Activated CD8-positive, alpha-beta T cell treated with anti-CD3 and anti-CD28 coated beads, Interleukin-2, amount 10 ng/mL, durations not matched to agents 7 days and 5 days (primary cell): ENCODE measurements at regions of chr10 and their contacts with region 1.

Region 1: DNA sequence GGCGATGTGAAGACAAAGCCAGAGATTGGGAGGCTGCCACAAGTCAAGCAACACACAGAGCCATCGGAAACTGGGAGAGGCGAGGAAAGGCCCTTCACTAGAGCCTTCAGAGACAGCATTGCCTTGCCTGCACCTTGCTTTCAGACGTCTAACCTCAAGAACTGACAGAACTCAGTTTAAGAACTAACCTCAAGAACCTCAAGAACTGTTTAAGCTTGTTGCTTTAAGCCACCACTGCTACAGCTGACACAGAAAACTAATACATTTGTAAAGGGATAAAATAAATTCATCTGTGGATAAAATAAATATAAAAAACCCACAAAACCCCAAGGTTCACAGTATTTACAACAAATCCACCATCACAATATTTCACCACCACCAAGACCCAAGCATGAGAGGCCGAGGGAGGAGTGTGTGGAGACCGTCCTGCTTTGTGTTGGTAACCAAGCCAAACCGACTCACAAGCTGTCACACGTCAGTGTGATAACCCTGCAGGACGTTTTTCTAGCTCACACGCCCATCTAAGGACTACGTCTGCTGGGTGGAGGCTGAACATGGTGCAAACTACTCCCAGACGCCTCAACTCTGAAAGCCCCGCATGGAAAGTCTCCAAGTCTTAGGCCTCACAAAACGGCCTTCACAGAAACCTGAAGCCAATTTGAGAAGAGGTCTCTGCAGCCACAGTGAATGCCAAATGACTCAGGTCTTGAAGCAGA is 116.8 kb downstream of the ABLIM1 start:
- DNase-seq: peak; percentile 88
- ATAC-seq: peak; percentile 83
- H3K4me3 Mint-ChIP-seq: peak overlapping the region; percentile 60
- H3K27ac Mint-ChIP-seq: peak overlapping the region; percentile 98
- H3K4me1 Mint-ChIP-seq: peaks cover 89% of the 10 kb centered on the region
- H3K27me3 Mint-ChIP-seq: no peaks in the 10 kb centered on the region

Region 2: GRCh38 chr10:114486938-114487814 is 54.1 kb before region 1 on chr10:
- CTCF ChIA-PET with region 1: interaction called, 10 read pairs
- POLR2A ChIA-PET with region 1: interaction called, 10 read pairs
- DNase-seq: no peak
- ATAC-seq: no peak
- H3K4me3 Mint-ChIP-seq: no peak overlapping the region
- H3K27ac Mint-ChIP-seq: no peak overlapping the region
- H3K4me1 Mint-ChIP-seq: peaks cover 28% of the 10 kb centered on the region
- H3K27me3 Mint-ChIP-seq: no peaks in the 10 kb centered on the region

Region 3: GRCh38 chr10:114492351-114493037 is 48.7 kb before region 1 on chr10:
- CTCF ChIA-PET with region 1: interaction called, 10 read pairs
- POLR2A ChIA-PET with region 1: interaction called, 10 read pairs
- DNase-seq: peak; percentile 66
- ATAC-seq: peak; percentile 59
- H3K4me3 Mint-ChIP-seq: peak overlapping the region; percentile 53
- H3K27ac Mint-ChIP-seq: peak overlapping the region; percentile 68
- H3K4me1 Mint-ChIP-seq: peaks cover 72% of the 10 kb centered on the region
- H3K27me3 Mint-ChIP-seq: no peaks in the 10 kb centered on the region

Region 4: DNA sequence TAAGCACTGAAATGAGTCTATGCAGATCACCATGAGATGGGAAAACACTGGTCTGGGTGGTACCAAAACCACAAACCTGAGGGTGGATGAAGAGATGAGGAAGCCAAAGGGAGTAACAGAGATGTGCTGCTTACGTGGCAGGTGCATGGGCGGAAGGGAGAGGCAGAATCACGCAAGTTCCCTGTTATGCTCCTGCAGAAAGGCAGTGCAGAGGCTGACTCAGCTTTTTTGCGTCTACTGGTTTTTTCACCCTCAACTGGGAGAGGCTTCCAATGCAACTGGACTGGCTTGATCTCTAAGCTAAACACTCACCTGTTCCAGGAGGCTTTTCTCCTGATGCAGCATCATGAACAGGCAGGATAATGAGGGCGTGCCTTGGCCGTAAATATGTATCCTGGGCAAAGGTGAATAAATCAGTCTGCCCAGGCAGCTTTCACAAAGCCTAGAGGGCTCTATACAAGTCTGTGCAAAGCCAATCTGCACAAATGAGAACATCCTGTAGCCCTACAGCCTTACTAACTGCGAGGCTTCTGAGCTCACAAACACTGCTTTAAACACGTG is 41.5 kb before region 1 on chr10:
- CTCF ChIA-PET with region 1: interaction called, 9 read pairs
- POLR2A ChIA-PET with region 1: interaction called, 11 read pairs
- DNase-seq: peak; percentile 64
- ATAC-seq: peak; percentile 66
- H3K4me3 Mint-ChIP-seq: peak overlapping the region; percentile 56
- H3K27ac Mint-ChIP-seq: peak overlapping the region; percentile 89
- H3K4me1 Mint-ChIP-seq: peaks cover 80% of the 10 kb centered on the region
- H3K27me3 Mint-ChIP-seq: no peaks in the 10 kb centered on the region

Region 5: DNA sequence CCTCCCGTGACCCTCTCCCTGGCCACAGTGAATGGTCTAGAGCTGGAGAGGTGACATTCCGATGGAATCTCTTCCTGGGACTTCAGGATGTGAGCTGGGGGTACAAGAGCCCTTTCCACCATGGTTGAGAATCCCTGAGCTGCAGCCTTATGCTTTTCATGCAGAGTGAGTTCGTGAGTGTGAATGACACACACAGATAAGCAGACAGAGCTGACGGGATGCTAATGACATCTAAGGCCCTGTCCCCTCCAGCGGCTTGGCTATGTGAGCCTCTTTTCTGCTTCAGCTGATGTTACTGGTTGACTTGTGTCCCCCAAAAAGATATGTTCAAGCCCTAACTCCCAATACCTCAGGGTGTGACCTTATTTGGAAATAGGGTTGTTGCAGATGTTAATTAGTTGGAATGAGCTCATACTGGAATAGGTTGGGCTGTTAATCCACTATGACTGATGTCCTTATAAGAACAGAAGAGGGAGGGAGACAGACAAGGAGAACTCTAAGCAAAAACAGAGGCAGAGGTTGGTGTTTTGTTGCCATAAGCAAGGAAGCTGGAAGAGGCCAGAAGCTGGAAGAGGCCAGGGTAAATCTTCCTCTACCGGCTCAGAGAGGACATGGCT is 25.8 kb before region 1 on chr10:
- CTCF ChIA-PET with region 1: interaction called, 421 read pairs
- POLR2A ChIA-PET with region 1: interaction called, 22 read pairs
- DNase-seq: no peak
- ATAC-seq: no peak
- H3K4me3 Mint-ChIP-seq: no peak overlapping the region
- H3K27ac Mint-ChIP-seq: peak overlapping the region; percentile 1
- H3K4me1 Mint-ChIP-seq: peaks cover 90% of the 10 kb centered on the region
- H3K27me3 Mint-ChIP-seq: no peaks in the 10 kb centered on the region

Region 6: GRCh38 chr10:114520453-114520852 is 20.8 kb before region 1 on chr10:
- CTCF ChIA-PET with region 1: interaction called, 421 read pairs
- POLR2A ChIA-PET with region 1: interaction called, 226 read pairs
- DNase-seq: no peak
- ATAC-seq: no peak
- H3K4me3 Mint-ChIP-seq: peak overlapping the region; percentile 34
- H3K27ac Mint-ChIP-seq: peak overlapping the region; percentile 66
- H3K4me1 Mint-ChIP-seq: peaks cover 96% of the 10 kb centered on the region
- H3K27me3 Mint-ChIP-seq: no peaks in the 10 kb centered on the region

Region 7: GRCh38 chr10:114571316-114571989 is 30.2 kb after region 1 on chr10:
- CTCF ChIA-PET with region 1: no interaction called
- POLR2A ChIA-PET with region 1: no interaction called
- DNase-seq: no peak
- ATAC-seq: no peak
- H3K4me3 Mint-ChIP-seq: no peak overlapping the region
- H3K27ac Mint-ChIP-seq: no peak overlapping the region
- H3K4me1 Mint-ChIP-seq: no peaks in the 10 kb centered on the region
- H3K27me3 Mint-ChIP-seq: no peaks in the 10 kb centered on the region

Region 8: DNA sequence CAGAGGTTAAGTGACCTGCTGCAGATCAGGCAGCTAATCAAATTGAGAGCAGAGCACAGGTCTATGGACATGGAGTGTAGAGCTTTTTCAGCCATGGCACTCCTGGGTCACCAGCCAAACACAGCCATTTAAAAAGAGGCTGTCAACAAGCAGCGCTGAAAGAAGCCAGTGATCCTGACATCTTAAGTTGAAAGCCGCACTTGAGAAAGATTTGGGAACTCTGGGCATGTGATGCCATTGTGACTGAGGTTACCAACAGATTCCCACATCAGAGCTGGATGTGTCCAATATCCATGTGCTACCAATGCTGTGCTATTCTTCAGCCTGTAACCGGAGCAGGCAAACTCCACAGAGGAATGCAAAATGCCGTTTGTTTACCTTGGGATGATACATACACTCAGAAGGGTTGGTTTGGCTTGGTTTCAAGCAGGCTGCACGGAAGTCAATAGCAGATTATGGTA is 173.1 kb after region 1 on chr10:
- CTCF ChIA-PET with region 1: no interaction called
- POLR2A ChIA-PET with region 1: no interaction called
- DNase-seq: no peak
- ATAC-seq: no peak
- H3K4me3 Mint-ChIP-seq: no peak overlapping the region
- H3K27ac Mint-ChIP-seq: no peak overlapping the region
- H3K4me1 Mint-ChIP-seq: no peaks in the 10 kb centered on the region
- H3K27me3 Mint-ChIP-seq: peaks cover 28% of the 10 kb centered on the region

Region 9: GRCh38 chr10:114821293-114821914 is 280.2 kb after region 1 on chr10 and contains the start of gene FHIP2A:
- CTCF ChIA-PET with region 1: interaction called, 6 read pairs
- POLR2A ChIA-PET with region 1: interaction called, 12 read pairs
- DNase-seq: peak; percentile 84
- ATAC-seq: peak; percentile 93
- H3K4me3 Mint-ChIP-seq: peak within 1 kb of the TSS; percentile 95
- H3K27ac Mint-ChIP-seq: peak within 1 kb of the TSS; percentile 94
- H3K4me1 Mint-ChIP-seq: peaks cover 31% of the 10 kb centered on the region
- H3K27me3 Mint-ChIP-seq: peaks cover 12% of the 10 kb centered on the region
- total RNA-seq, gene FHIP2A: 15.2 to 17.6 TPM